Activated CD4-positive, alpha-beta T cell treated with anti-CD3 and anti-CD28 coated beads for 36 hours (primary cell): ENCODE measurements at regions of chr3 and their contacts with region 1.

Region 1: DNA sequence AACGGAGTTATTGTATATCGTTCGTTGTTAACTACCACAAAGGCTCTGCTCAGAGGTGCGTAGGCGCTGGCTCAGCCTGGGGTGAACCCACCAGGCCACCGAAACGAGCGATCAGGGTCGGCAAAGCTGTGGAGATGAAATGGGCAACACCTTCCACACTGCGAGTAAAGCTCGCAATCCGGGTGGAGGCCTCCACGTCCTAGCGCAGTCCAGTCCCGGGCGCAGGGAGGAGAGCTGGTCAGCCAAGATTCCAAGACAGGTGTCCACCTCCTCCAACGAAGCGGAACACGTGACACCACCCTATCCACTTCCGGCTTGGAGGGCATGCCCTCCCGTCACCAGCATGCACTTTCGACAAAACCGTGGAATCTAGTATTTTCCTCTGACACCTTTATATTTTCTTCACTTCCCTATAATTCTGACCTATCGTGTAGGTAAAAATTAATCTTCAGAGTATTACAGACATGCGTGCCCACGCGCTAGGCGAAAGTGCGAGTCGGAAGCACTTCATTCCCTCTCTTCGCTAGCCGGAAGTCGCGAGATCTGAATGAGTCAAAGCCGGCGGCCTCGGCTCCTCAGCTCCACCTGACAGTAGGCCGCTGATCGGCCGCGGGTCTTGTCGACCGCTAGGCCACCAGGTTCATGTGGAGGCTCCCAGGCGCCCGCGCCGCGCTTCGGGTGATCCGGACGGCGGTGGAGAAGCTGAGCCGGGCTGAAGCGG is at the start of gene PDE12:
- DNase-seq: peak; percentile 91
- ATAC-seq: peak; percentile 82
- H3K4me3 Mint-ChIP-seq: peak within 1 kb of the TSS; percentile 91
- H3K27ac Mint-ChIP-seq: peak within 1 kb of the TSS; percentile 100
- H3K4me1 Mint-ChIP-seq: peaks cover 29% of the 10 kb centered on the region
- H3K27me3 Mint-ChIP-seq: no peaks in the 10 kb centered on the region
- total RNA-seq, gene PDE12: 19.2 to 19.9 TPM

Region 2: DNA sequence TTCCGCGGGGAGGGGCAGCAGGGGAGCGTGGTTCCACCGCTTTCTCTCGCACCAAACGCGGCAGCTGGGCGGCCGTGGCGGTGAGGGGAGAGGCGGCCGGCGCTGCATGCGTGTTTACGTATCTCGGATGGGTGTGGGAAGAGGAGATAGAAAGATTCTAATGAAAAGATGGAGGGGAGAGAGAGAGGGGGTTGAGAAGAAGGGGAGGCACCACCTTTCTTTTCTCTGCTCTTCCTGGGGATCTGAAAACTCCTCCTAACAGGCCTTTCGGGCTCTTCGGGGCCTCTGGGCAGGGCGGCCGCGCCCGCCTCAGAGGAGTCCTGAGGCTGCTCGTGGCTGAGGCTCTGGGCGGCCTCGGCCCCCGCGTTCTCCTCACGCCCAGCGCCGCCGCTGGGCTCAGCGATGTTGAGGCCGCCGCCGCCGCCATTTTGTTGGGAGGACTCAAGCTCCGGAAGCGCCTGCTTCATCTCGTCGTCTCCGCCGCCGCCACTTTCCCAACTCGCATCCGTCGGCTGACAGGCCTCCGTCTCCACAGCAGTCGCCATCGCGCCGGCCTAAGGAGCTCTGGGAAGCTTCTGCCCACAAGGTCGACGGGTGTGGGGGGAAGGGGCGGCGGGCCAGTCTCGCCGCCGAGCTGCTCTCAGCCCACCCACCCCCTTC is 873.3 kb before region 1 on chr3:
- CTCF ChIA-PET with region 1: no interaction called
- POLR2A ChIA-PET with region 1: no interaction called
- intact Hi-C with region 1: loop called in 1 of 2 experiments (anchors 5 kb)
- DNase-seq: peak; percentile 88
- ATAC-seq: peak; percentile 78
- H3K4me3 Mint-ChIP-seq: peak overlapping the region; percentile 92
- H3K27ac Mint-ChIP-seq: peak overlapping the region; percentile 94
- H3K4me1 Mint-ChIP-seq: peaks cover 38% of the 10 kb centered on the region
- H3K27me3 Mint-ChIP-seq: no peaks in the 10 kb centered on the region

Region 3: GRCh38 chr3:57569859-57570450 is 14.1 kb after region 1 on chr3:
- CTCF ChIA-PET with region 1: interaction called, 10 read pairs
- POLR2A ChIA-PET with region 1: interaction called, 3 read pairs
- intact Hi-C with region 1: no loop called
- DNase-seq: no peak
- ATAC-seq: no peak
- H3K4me3 Mint-ChIP-seq: no peak overlapping the region
- H3K27ac Mint-ChIP-seq: no peak overlapping the region
- H3K4me1 Mint-ChIP-seq: peaks cover 10% of the 10 kb centered on the region
- H3K27me3 Mint-ChIP-seq: no peaks in the 10 kb centered on the region

Region 4: GRCh38 chr3:57692259-57693147 is 136.6 kb after region 1 on chr3 and contains the start of gene DENND6A:
- CTCF ChIA-PET with region 1: no interaction called
- POLR2A ChIA-PET with region 1: no interaction called
- intact Hi-C with region 1: loop called (anchors 1 to 2 kb)
- DNase-seq: peak; percentile 98
- ATAC-seq: peak; percentile 88
- H3K4me3 Mint-ChIP-seq: peak within 1 kb of the TSS; percentile 87
- H3K27ac Mint-ChIP-seq: peak within 1 kb of the TSS; percentile 85
- H3K4me1 Mint-ChIP-seq: peaks cover 31% of the 10 kb centered on the region
- H3K27me3 Mint-ChIP-seq: no peaks in the 10 kb centered on the region
- total RNA-seq, gene DENND6A: 15.0 to 17.1 TPM

Region 5: GRCh38 chr3:57770009-57770827 is 214.3 kb after region 1 on chr3:
- CTCF ChIA-PET with region 1: no interaction called
- POLR2A ChIA-PET with region 1: no interaction called
- intact Hi-C with region 1: no loop called
- DNase-seq: no peak
- ATAC-seq: no peak
- H3K4me3 Mint-ChIP-seq: no peak overlapping the region
- H3K27ac Mint-ChIP-seq: no peak overlapping the region
- H3K4me1 Mint-ChIP-seq: peaks cover 37% of the 10 kb centered on the region
- H3K27me3 Mint-ChIP-seq: no peaks in the 10 kb centered on the region